Dorsolateral prefrontal cortex (tissue), 120 donors: ENCODE measurements at regions of chr5 and their contacts with region 1.

Region 1: DNA sequence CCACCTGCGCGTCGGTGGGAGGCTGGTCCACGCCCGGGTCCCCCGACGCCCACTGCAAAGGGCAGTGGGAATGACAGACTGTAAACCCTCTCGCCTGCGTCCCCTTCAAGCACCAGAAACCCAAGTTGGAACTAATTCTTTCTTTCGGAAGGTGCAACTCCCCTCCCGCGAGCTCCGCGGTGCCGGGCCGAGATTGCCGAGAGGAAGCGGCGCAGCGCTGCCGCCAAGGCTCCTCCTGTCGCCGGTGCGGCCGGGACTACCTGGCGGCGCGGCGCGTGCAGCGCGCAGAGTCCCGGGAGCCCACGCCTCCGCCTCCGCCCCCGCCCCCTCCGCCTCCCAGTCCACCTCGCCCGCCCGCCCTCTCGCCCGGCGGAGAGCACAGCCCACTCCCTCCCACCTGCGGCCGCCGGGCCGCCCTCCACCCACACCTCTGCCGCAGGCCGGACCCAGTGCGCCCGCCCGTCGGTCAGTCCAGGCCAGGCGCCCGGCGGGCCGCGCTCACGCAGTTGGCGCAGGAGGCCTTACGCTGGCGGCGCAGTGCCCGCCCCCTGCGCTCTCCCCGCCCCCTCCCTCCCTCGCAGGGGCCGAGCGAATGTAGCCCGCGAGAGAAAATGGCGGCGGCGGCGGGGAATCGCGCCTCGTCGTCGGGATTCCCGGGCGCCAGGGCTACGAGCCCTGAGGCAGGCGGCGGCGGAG is at the start of gene MAP3K1:
- DNase-seq: peak; percentile 50 to 84 (median 66)
- H3K4me3 ChIP-seq: peak within 1 kb of the TSS; percentile 62 to 97 (median 88)
- H3K27ac ChIP-seq: peak within 1 kb of the TSS; percentile 25 to 98 (median 87)
- H3K27me3 ChIP-seq: no peaks in the 10 kb centered on the region
- CTCF ChIP-seq: peak in 15 of 56 donors; percentile 1 to 31 (median 16)
- total RNA-seq, gene MAP3K1: 4.9 to 12.5 (median 7.8) TPM

Region 2: DNA sequence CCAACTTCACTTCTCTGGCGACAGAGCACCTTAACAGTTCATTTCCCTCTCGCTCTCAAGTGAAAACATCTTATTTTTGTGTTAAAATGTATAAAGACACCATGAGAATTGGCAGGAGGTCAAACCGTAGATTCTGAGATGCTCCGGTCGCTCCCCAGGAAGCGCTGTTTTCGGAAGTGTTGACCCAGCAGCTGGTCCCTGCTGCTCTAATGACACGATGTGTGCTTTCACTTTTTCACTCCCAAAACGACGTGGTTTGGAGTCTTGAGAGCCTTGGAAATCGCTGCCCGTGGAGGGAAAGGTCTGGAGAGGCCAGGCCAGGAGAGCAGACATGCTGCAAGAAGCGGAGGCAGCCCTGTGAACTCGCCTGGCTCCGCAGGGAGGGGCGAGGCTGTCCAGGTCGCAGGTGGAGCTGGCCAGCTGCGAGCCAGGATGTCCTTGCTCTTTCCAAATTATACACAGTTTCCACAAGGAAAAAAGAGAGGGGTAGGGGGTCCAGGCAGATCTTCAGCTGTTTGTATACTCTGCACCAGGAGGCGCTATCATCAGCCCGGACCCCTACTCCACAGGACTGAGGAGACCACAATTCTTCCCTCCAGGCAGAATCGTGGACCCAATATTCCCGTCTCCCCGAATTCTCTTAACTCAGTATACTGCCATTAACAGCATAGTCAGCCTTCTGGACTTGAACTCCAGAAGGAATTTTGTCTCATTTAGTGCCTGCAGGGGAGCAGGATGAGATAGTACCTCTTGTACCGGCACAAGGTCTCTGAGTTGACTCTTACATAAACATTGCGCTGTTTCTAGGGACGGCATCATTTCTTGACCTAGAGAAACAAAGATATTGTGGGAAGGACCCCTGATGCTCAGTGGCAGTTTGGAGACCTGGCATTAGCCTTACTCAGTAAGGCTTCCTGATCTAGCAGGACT is 333.4 kb before region 1 on chr5:
- intact Hi-C with region 1: loop called (anchors 5 kb)
- DNase-seq: peak in 4 of 10 donors; percentile 12 to 52 (median 36)
- H3K4me3 ChIP-seq: peak overlapping the region; percentile 47 to 91 (median 79)
- H3K27ac ChIP-seq: peak overlapping the region; percentile 3 to 95 (median 87)
- H3K27me3 ChIP-seq: no peaks in the 10 kb centered on the region
- CTCF ChIP-seq: peak in 39 of 56 donors; percentile 6 to 46 (median 30)